Activated CD4-positive, alpha-beta memory T cell treated with anti-CD3 and anti-CD28 coated beads for 36 hours (primary cell): ENCODE measurements at regions of chr5 and their contacts with region 1.

Region 1: DNA sequence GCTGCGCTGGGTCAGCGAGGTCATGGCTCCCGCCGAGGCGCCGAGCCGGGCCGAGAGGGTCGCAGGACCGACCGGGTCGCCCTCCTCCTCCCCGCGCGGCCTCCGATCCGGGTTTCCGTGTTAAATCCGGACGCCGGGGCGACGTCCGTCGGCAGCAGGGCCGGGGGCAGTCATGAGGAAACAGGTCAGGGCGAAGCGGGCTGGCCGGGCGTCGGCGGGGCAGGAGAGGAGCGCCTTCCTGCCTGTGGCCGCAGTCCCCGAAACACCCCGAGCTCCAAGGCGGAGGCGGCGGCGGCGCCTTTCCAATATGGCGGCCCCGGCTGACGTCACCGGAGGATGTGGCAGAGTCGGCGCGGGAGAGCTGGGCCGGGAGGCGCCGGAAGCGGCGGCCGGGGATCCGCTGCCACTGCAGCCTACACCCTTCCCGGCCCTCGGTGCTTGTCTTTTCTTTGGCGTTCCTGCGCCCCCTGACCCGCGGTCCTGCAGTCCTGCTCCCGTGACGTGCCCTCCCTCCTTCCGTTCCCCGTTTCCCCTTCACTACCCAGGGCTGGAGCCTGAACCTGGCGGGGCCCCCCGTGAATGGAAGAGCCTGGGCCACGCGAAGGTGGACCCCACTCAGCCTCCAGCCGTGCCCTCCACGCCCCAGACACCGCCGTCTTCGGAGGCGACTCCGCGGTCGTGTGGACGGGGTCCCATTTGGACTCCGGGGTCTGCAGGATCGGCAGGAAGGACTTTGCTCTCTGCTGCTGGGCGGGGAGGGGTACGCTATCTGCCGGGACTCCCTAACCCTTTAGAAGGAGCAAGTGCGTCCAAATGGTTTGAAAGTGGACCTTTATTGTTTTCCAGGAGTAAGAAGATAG is at the start of gene GOLPH3:
- DNase-seq: peak; percentile 96
- H3K4me3 Mint-ChIP-seq: peak within 1 kb of the TSS; percentile 99
- H3K27ac Mint-ChIP-seq: peak within 1 kb of the TSS; percentile 98
- H3K4me1 Mint-ChIP-seq: peaks cover 34% of the 10 kb centered on the region
- H3K27me3 Mint-ChIP-seq: peaks cover 4% of the 10 kb centered on the region
- total RNA-seq, gene GOLPH3: 65.6 to 67.1 TPM

Region 2: DNA sequence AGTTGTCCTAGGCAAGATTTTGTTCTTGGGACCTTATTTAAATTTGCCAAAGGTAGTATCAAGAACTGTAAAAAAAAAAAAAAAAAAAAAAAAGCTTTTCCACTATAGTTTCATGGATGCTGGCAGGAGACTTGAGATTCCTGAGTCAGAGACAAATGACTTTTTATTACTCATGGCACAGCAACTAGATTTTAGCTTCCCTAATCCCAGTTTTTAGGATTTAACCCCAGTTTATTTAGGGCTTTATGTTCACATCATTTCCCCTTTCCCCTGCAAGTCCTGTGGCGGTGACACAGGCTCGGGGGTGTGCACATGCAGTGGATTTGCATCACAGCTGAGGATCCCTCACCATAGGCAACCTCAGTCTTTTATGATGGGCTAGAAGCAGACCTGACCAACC is 145.0 kb before region 1 on chr5:
- CTCF ChIA-PET with region 1: no interaction called
- POLR2A ChIA-PET with region 1: no interaction called
- intact Hi-C with region 1: no loop called
- DNase-seq: no peak
- H3K4me3 Mint-ChIP-seq: no peak overlapping the region
- H3K27ac Mint-ChIP-seq: no peak overlapping the region
- H3K4me1 Mint-ChIP-seq: peaks cover 14% of the 10 kb centered on the region
- H3K27me3 Mint-ChIP-seq: no peaks in the 10 kb centered on the region

Region 3: GRCh38 chr5:32115985-32116384 is 58.3 kb before region 1 on chr5:
- CTCF ChIA-PET with region 1: no interaction called
- POLR2A ChIA-PET with region 1: no interaction called
- intact Hi-C with region 1: loop called (anchors 5 kb)
- DNase-seq: no peak
- H3K4me3 Mint-ChIP-seq: no peak overlapping the region
- H3K27ac Mint-ChIP-seq: peak overlapping the region; percentile 29
- H3K4me1 Mint-ChIP-seq: peaks cover 41% of the 10 kb centered on the region
- H3K27me3 Mint-ChIP-seq: no peaks in the 10 kb centered on the region

Region 4: GRCh38 chr5:32206509-32207354 is 32.5 kb after region 1 on chr5:
- CTCF ChIA-PET with region 1: no interaction called
- POLR2A ChIA-PET with region 1: interaction called, 13 read pairs
- intact Hi-C with region 1: loop called (anchors 1 kb)
- DNase-seq: peak; percentile 14
- H3K4me3 Mint-ChIP-seq: no peak overlapping the region
- H3K27ac Mint-ChIP-seq: peak overlapping the region; percentile 57
- H3K4me1 Mint-ChIP-seq: peaks cover 36% of the 10 kb centered on the region
- H3K27me3 Mint-ChIP-seq: peaks cover 3% of the 10 kb centered on the region

Region 5: GRCh38 chr5:32217886-32218396 is 43.7 kb after region 1 on chr5:
- CTCF ChIA-PET with region 1: no interaction called
- POLR2A ChIA-PET with region 1: no interaction called
- intact Hi-C with region 1: no loop called
- DNase-seq: no peak
- H3K4me3 Mint-ChIP-seq: no peak overlapping the region
- H3K27ac Mint-ChIP-seq: no peak overlapping the region
- H3K4me1 Mint-ChIP-seq: no peaks in the 10 kb centered on the region
- H3K27me3 Mint-ChIP-seq: no peaks in the 10 kb centered on the region

Region 6: DNA sequence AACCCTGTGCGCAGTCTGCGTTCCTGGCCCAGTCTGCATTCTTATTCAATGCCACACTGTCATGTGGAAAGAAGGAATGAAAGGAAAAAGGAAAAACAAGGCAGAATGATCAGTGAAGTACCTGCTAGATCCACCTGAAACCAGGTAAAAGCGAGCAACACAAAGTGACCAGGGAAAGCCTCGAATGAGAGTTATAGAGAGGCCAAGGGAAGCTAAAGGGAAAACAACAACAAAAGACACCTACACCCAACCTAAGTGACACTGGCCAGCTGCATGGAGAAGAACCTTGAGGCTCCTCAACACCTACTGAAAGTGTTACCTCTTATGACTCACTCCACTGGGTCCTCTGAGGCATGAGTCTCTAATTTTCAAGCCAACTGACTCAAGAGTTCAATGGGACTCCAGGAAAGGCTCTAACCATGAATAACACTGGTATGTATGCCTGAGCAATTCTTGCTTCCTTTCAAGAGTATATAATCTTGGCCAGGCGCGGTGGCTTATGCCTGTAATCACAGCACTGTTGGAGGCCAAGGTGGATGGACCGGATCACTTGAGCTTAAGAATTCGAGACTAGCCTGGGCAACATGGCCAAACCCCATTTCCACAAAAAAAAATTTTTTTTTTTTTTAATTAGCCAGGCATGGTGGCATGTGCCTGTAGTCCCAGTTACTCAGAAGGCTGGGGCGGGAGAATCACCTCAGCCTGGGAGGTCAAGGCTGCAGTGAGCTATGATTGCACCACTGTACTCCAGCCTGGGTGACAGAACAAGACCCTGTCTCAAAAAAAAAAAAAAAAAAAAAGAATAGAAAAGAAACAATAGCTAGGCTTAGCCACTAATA is 109.5 kb after region 1 on chr5:
- CTCF ChIA-PET with region 1: interaction called, 3 read pairs
- POLR2A ChIA-PET with region 1: no interaction called
- intact Hi-C with region 1: loop called (anchors 1 kb)
- DNase-seq: peak; percentile 42
- H3K4me3 Mint-ChIP-seq: no peak overlapping the region
- H3K27ac Mint-ChIP-seq: peak overlapping the region; percentile 38
- H3K4me1 Mint-ChIP-seq: peaks cover 43% of the 10 kb centered on the region
- H3K27me3 Mint-ChIP-seq: no peaks in the 10 kb centered on the region